CD4-positive, alpha-beta T cell (primary cell): ENCODE measurements at regions of chr1 and their contacts with region 1.

Region 1: DNA sequence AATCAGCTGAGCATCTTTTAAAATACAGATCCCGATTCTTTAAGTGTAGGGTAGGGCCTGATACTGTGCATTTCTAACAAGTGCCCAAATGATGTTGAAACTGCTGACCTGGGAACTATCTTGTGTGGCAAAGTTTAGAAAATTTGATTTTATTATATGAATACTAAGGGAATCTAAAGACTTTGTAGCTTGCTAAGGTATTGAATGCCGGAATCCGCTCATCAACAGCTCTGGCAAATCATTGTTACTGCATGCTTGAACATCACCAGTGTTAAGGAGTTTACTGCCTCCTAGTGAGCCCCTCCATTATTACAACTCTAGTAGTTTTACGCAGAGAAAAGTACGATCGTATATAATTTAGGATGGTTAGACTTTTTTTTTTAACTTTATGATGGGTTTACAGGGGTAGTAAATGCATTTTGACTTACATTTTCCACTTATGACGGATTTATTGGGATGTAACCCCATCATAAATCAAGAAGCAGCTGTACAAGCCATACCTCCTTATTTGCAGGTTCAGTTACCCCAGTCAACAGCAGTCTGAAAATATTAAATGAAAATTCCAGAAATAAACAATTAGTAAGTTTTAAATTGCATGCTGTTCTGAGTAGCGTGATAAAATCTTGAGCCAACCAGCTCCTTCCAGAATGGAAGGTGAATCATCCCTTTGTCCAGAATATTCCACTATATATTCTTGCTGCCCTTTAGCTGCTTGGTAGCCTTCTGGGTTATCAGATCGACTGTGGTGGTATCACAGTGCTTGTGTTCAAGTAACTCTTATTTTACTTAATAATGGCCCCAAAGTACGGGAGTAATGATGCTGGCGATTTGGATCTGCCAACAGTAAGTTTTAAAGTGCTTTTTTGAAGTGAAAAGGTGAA is 892 bp downstream of the TYW3 start:
- DNase-seq: peak in 9 of 14 experiments; percentile 4 to 84 (median 32)
- ATAC-seq: peak; percentile 79
- H3K4me3 ChIP-seq: peak overlapping the region; percentile 90
- H3K4me3 Mint-ChIP-seq: peak overlapping the region; percentile 97
- H3K27ac ChIP-seq: peak overlapping the region; percentile 73 to 81
- H3K27ac Mint-ChIP-seq: peak overlapping the region; percentile 88
- H3K4me1 ChIP-seq: peaks cover 26% of the 10 kb centered on the region
- H3K4me1 Mint-ChIP-seq: peaks cover 58% of the 10 kb centered on the region
- H3K27me3 ChIP-seq: no peaks in the 10 kb centered on the region
- H3K27me3 Mint-ChIP-seq: no peaks in the 10 kb centered on the region
- CTCF ChIP-seq: peak; percentile 76

Region 2: DNA sequence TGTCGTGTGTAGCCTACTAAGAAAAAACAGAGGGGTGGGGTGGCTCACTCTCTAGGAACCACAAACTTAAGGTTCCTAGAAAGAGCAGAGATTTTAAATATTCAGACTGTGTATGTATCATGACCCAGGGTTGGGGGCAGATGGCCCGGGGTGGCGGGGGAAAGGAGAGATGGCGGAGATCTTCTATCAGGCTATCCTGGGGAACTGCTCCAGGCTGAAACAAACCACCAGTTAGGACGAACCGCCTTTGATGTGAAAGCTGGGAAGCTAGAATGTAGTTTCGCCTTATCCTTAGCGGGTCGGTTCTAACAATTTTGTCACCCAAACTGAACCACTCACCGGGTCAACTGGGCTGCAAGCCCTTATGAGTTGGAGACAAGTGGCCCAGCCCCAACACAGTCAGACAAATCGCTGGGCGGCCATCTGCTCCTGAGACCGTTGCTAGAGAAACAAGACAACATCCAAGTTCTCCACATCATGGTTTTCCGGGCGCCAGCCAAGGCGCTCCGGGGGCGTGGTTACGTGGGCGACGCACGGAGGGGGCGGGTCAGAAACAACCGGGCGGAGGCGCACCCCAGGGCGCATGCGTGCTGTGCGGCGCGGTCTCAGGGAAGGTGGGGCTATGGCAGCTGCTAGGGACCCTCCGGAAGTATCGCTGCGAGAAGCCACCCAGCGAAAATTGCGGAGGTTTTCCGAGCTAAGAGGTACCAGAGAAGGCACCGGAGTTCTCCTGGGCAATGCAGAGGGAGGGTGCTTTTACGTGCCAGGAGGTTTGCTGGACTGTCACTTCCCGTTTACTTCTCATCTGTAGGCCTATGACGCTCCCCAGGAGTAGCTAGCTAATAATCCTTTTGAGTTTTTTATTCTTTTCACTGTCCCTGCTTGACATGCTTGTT is 535.9 kb before region 1 on chr1 and contains the starts of genes FPGT and LRRIQ3:
- CTCF ChIA-PET with region 1: no interaction called
- POLR2A ChIA-PET with region 1: interaction called, 10 read pairs
- intact Hi-C with region 1: loop called (anchors 2 to 10 kb)
- DNase-seq: peak; percentile 92 to 98 (median 96)
- ATAC-seq: peak; percentile 94
- H3K4me3 ChIP-seq: peak within 1 kb of the TSS; percentile 76
- H3K4me3 Mint-ChIP-seq: peak within 1 kb of the TSS; percentile 93
- H3K27ac ChIP-seq: peak within 1 kb of the TSS; percentile 59 to 85
- H3K27ac Mint-ChIP-seq: peak within 1 kb of the TSS; percentile 86
- H3K4me1 ChIP-seq: peaks cover 6% of the 10 kb centered on the region
- H3K4me1 Mint-ChIP-seq: peaks cover 38% of the 10 kb centered on the region
- H3K27me3 ChIP-seq: no peaks in the 10 kb centered on the region
- H3K27me3 Mint-ChIP-seq: no peaks in the 10 kb centered on the region
- CTCF ChIP-seq: no peak
- total RNA-seq, gene FPGT: 3.0 to 4.5 TPM
- total RNA-seq, gene LRRIQ3: 0.08 to 0.25 TPM

Region 3: GRCh38 chr1:74689621-74690363 is 44.1 kb before region 1 on chr1:
- CTCF ChIA-PET with region 1: interaction called, 4 read pairs
- POLR2A ChIA-PET with region 1: no interaction called
- intact Hi-C with region 1: loop called in 1 of 2 experiments (anchors 1 kb)
- DNase-seq: peak in 10 of 14 experiments; percentile 3 to 71 (median 11)
- ATAC-seq: no peak
- H3K4me3 ChIP-seq: no peak overlapping the region
- H3K4me3 Mint-ChIP-seq: no peak overlapping the region
- H3K27ac ChIP-seq: no peak overlapping the region
- H3K27ac Mint-ChIP-seq: no peak overlapping the region
- H3K4me1 ChIP-seq: no peaks in the 10 kb centered on the region
- H3K4me1 Mint-ChIP-seq: no peaks in the 10 kb centered on the region
- H3K27me3 ChIP-seq: peaks cover 0 to 4% of the 10 kb centered on the region in 2 experiments
- H3K27me3 Mint-ChIP-seq: peaks cover 9% of the 10 kb centered on the region
- CTCF ChIP-seq: peak; percentile 95